ENCODE measurements at regions of chr19 and their contacts with region 1.

Region 1: DNA sequence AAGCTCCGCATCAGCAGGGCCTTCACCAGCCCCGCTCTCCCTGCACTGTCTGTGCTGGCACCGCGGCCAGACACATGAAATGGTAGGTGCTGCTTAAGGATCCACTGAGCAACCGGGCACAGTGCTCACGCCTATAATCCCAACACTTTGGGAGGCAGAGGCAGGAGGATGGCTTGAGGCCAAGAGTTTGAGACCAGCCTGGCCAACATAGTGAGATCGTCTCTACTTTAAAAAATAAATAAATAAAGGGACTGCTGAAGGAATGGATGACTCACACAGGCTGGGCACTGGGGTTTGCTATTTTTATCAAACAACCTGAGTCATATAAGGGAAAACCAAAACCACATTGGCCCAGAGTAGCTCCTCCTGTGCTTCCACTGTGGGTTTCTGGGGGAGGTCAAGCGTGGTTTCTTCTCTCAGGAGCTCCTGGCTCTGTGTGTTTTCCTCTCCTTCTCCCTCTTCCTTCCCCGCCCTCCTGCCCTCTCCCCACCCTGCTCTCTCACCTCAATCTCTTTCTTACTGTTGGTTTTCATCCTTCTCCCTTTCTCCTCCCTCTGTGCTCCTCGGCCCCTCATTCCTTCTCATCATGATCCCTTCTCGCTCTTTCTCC is 21.3 kb downstream of the VRK3 start:
- DNase-seq: peak in 3 of 9 experiments; percentile 35 to 62 (median 50)
- ATAC-seq: no peak
- H3K4me3 ChIP-seq: no peak overlapping the region
- H3K4me3 Mint-ChIP-seq: no peak overlapping the region
- H3K27ac ChIP-seq: peak overlapping the region in 1 of 2 experiments; percentile 43
- H3K27ac Mint-ChIP-seq: peak overlapping the region; percentile 22
- H3K4me1 ChIP-seq: no peaks in the 10 kb centered on the region
- H3K4me1 Mint-ChIP-seq: peaks cover 7% of the 10 kb centered on the region
- H3K27me3 ChIP-seq: no peaks in the 10 kb centered on the region
- H3K27me3 Mint-ChIP-seq: no peaks in the 10 kb centered on the region
- CTCF ChIP-seq: no peak

Region 2: GRCh38 chr19:49911381-49912145 is 92.4 kb before region 1 on chr19:
- CTCF ChIA-PET with region 1: no interaction called
- POLR2A ChIA-PET with region 1: no interaction called
- intact Hi-C with region 1: no loop called
- DNase-seq: peak in 2 of 9 experiments; percentile 33 to 46
- ATAC-seq: peak; percentile 17
- H3K4me3 ChIP-seq: no peak overlapping the region
- H3K4me3 Mint-ChIP-seq: no peak overlapping the region
- H3K27ac ChIP-seq: peak overlapping the region in 1 of 2 experiments; percentile 36
- H3K27ac Mint-ChIP-seq: peak overlapping the region; percentile 87
- H3K4me1 ChIP-seq: no peaks in the 10 kb centered on the region
- H3K4me1 Mint-ChIP-seq: peaks cover 10% of the 10 kb centered on the region
- H3K27me3 ChIP-seq: no peaks in the 10 kb centered on the region
- H3K27me3 Mint-ChIP-seq: no peaks in the 10 kb centered on the region
- CTCF ChIP-seq: no peak

Region 3: GRCh38 chr19:50039968-50040367 is 36.1 kb after region 1 on chr19:
- CTCF ChIA-PET with region 1: no interaction called
- POLR2A ChIA-PET with region 1: no interaction called
- intact Hi-C with region 1: loop called in 1 of 2 experiments (anchors 1 kb)
- DNase-seq: no peak
- ATAC-seq: no peak
- H3K4me3 ChIP-seq: no peak overlapping the region
- H3K4me3 Mint-ChIP-seq: no peak overlapping the region
- H3K27ac ChIP-seq: no peak overlapping the region
- H3K27ac Mint-ChIP-seq: no peak overlapping the region
- H3K4me1 ChIP-seq: no peaks in the 10 kb centered on the region
- H3K4me1 Mint-ChIP-seq: peaks cover 2% of the 10 kb centered on the region
- H3K27me3 ChIP-seq: no peaks in the 10 kb centered on the region
- H3K27me3 Mint-ChIP-seq: no peaks in the 10 kb centered on the region
- CTCF ChIP-seq: no peak

Region 4: DNA sequence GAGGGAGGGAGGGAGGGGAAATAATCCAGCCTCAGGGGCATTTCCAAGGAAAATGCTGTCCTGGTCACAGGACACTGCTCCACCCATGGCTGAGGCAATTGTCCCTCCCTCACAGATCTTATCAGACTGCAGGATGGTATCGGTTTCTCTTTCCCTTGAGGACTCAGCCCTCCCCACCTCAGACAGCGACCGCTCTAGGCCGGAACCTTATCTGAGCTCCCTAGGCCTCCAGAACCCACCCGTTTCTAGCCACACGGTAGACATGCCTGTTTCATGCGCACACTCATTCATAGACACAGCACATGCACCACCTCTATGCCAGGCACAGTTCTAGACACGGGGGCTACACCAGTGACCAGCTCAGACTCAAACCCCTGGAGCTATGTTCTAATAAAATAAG is 169.2 kb after region 1 on chr19:
- CTCF ChIA-PET with region 1: no interaction called
- POLR2A ChIA-PET with region 1: no interaction called
- intact Hi-C with region 1: no loop called
- DNase-seq: peak in 1 of 9 experiments; percentile 33
- ATAC-seq: no peak
- H3K4me3 ChIP-seq: no peak overlapping the region
- H3K4me3 Mint-ChIP-seq: no peak overlapping the region
- H3K27ac ChIP-seq: no peak overlapping the region
- H3K27ac Mint-ChIP-seq: peak overlapping the region; percentile 2
- H3K4me1 ChIP-seq: no peaks in the 10 kb centered on the region
- H3K4me1 Mint-ChIP-seq: no peaks in the 10 kb centered on the region
- H3K27me3 ChIP-seq: no peaks in the 10 kb centered on the region
- H3K27me3 Mint-ChIP-seq: peaks cover 19% of the 10 kb centered on the region
- CTCF ChIP-seq: no peak

Measured in CD8-positive, alpha-beta T cell (primary cell).